ENCODE measurements at regions of chr15 and their contacts with region 1.

Region 1: DNA sequence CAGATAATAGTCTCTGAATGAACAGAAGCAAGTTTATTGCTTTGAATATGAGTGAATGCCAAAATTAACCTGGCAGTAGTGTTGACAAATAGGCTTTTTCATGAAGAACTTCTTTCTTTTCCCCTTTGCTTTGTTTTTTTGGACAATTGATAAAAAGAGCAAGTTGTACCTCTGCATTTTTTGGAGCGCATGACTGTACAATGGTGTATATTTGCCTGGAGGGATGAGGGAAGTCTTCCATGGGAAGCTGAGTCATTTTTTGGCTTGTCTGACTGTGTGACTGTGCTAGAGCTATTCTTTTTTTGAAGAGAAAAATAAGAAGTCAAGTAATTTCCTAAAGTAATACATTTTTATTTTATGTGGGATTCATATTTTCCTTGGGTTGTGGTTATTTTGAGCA is 186.9 kb downstream of the KLHL25 start:
- DNase-seq: peak; percentile 89
- H3K4me3 Mint-ChIP-seq: no peak overlapping the region
- H3K27ac Mint-ChIP-seq: no peak overlapping the region
- H3K4me1 Mint-ChIP-seq: peaks cover 16% of the 10 kb centered on the region
- H3K27me3 Mint-ChIP-seq: no peaks in the 10 kb centered on the region
- CTCF ChIP-seq: no peak

Region 2: DNA sequence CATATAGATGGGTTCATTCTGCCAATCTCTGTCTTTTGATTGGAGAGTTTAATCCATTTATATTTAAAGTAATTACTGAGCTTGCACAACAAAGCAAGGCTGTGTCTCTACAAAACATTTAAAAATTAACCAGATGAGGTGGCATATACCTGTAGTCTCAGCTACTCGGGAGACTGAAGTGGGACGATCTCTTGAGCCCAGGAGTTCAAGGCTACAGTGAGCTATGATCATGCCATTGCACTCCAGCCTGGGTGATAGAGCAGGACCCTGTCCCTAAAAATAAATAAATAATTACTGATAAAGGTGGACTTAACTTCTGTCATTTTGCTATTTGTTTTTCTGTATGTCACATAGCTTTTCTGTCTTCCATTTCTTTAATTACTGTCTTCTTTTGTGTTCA is 548.1 kb before region 1 on chr15:
- CTCF ChIA-PET with region 1: no interaction called
- POLR2A ChIA-PET with region 1: no interaction called
- intact Hi-C with region 1: no loop called
- DNase-seq: no peak
- H3K4me3 Mint-ChIP-seq: no peak overlapping the region
- H3K27ac Mint-ChIP-seq: no peak overlapping the region
- H3K4me1 Mint-ChIP-seq: peaks cover 7% of the 10 kb centered on the region
- H3K27me3 Mint-ChIP-seq: no peaks in the 10 kb centered on the region
- CTCF ChIP-seq: no peak

Region 3: GRCh38 chr15:85485956-85486567 is 121.8 kb before region 1 on chr15:
- CTCF ChIA-PET with region 1: no interaction called
- POLR2A ChIA-PET with region 1: no interaction called
- intact Hi-C with region 1: no loop called
- DNase-seq: peak; percentile 83
- H3K4me3 Mint-ChIP-seq: no peak overlapping the region
- H3K27ac Mint-ChIP-seq: no peak overlapping the region
- H3K4me1 Mint-ChIP-seq: peaks cover 37% of the 10 kb centered on the region
- H3K27me3 Mint-ChIP-seq: no peaks in the 10 kb centered on the region
- CTCF ChIP-seq: peak; percentile 62

Region 4: GRCh38 chr15:85592148-85592547 is 15.7 kb before region 1 on chr15:
- CTCF ChIA-PET with region 1: interaction called, 3 read pairs
- POLR2A ChIA-PET with region 1: interaction called, 10 read pairs
- intact Hi-C with region 1: loop called (anchors 2 kb)
- DNase-seq: peak; percentile 80
- H3K4me3 Mint-ChIP-seq: no peak overlapping the region
- H3K27ac Mint-ChIP-seq: peak overlapping the region; percentile 33
- H3K4me1 Mint-ChIP-seq: peaks cover 25% of the 10 kb centered on the region
- H3K27me3 Mint-ChIP-seq: no peaks in the 10 kb centered on the region
- CTCF ChIP-seq: no peak

Region 5: DNA sequence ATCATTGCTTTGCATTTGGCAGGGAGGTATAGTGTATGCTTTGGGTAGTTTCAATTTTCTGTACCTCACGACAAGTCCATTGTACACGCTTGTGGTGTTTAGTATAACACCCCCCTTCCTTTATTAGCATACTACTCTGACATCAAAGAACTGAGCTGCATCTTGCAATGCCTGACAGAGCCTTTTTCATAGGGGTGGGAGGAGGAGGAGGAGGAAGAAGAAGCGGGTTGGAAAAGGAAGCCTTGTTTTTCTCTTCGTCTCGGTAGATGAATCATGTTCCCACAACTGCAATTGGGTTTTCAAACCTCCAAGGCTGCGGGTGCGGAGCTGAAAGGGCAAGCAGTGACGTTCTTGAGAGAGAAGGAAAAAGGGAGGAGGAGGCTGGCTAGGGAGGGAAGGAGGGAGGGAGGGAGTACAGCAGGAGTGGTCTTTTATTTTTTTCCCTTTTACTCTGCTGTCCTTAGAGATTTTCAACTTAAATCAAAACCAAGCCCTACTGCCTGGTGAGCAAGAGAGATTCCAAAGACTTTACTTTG is 11.2 kb after region 1 on chr15:
- CTCF ChIA-PET with region 1: no interaction called
- POLR2A ChIA-PET with region 1: interaction called, 17 read pairs
- intact Hi-C with region 1: no loop called
- DNase-seq: peak; percentile 91
- H3K4me3 Mint-ChIP-seq: no peak overlapping the region
- H3K27ac Mint-ChIP-seq: no peak overlapping the region
- H3K4me1 Mint-ChIP-seq: peaks cover 32% of the 10 kb centered on the region
- H3K27me3 Mint-ChIP-seq: no peaks in the 10 kb centered on the region
- CTCF ChIP-seq: no peak

Region 6: GRCh38 chr15:85639752-85640381 is 32.0 kb after region 1 on chr15:
- CTCF ChIA-PET with region 1: no interaction called
- POLR2A ChIA-PET with region 1: no interaction called
- intact Hi-C with region 1: no loop called
- DNase-seq: peak; percentile 38
- H3K4me3 Mint-ChIP-seq: no peak overlapping the region
- H3K27ac Mint-ChIP-seq: peak overlapping the region; percentile 27
- H3K4me1 Mint-ChIP-seq: peaks cover 6% of the 10 kb centered on the region
- H3K27me3 Mint-ChIP-seq: no peaks in the 10 kb centered on the region
- CTCF ChIP-seq: no peak

Region 7: GRCh38 chr15:85793641-85794602 is 186.1 kb after region 1 on chr15:
- CTCF ChIA-PET with region 1: no interaction called
- POLR2A ChIA-PET with region 1: no interaction called
- intact Hi-C with region 1: no loop called
- DNase-seq: peak; percentile 27
- H3K4me3 Mint-ChIP-seq: peak overlapping the region; percentile 80
- H3K27ac Mint-ChIP-seq: peak overlapping the region; percentile 32
- H3K4me1 Mint-ChIP-seq: peaks cover 22% of the 10 kb centered on the region
- H3K27me3 Mint-ChIP-seq: no peaks in the 10 kb centered on the region
- CTCF ChIP-seq: no peak